Mammary epithelial cell (primary cell): ENCODE measurements at regions of chr5 and their contacts with region 1.

Region 1: GRCh38 chr5:142611154-142611553 is 74.7 kb downstream of the FGF1 start:
- DNase-seq: peak; percentile 58
- H3K4me3 ChIP-seq: no peak overlapping the region
- H3K27ac ChIP-seq: no peak overlapping the region
- H3K4me1 ChIP-seq: peaks cover 22% of the 10 kb centered on the region
- H3K27me3 ChIP-seq: no peaks in the 10 kb centered on the region
- CTCF ChIP-seq: peak; percentile 87 to 92

Region 2: GRCh38 chr5:142151436-142152383 is 459.4 kb before region 1 on chr5:
- CTCF ChIA-PET with region 1: no interaction called
- dilution Hi-C with region 1: no loop called
- in situ Hi-C with region 1: no loop called
- intact Hi-C with region 1: loop called (anchors 2 kb)
- DNase-seq: peak; percentile 37
- H3K4me3 ChIP-seq: no peak overlapping the region
- H3K27ac ChIP-seq: no peak overlapping the region
- H3K4me1 ChIP-seq: no peaks in the 10 kb centered on the region
- H3K27me3 ChIP-seq: no peaks in the 10 kb centered on the region
- CTCF ChIP-seq: peak; percentile 78 to 88

Region 3: GRCh38 chr5:142561486-142562097 is 49.6 kb before region 1 on chr5:
- CTCF ChIA-PET with region 1: no interaction called
- dilution Hi-C with region 1: loop called (anchors 5 kb)
- in situ Hi-C with region 1: no loop called
- intact Hi-C with region 1: no loop called
- DNase-seq: no peak
- H3K4me3 ChIP-seq: no peak overlapping the region
- H3K27ac ChIP-seq: no peak overlapping the region
- H3K4me1 ChIP-seq: no peaks in the 10 kb centered on the region
- H3K27me3 ChIP-seq: no peaks in the 10 kb centered on the region
- CTCF ChIP-seq: no peak

Region 4: DNA sequence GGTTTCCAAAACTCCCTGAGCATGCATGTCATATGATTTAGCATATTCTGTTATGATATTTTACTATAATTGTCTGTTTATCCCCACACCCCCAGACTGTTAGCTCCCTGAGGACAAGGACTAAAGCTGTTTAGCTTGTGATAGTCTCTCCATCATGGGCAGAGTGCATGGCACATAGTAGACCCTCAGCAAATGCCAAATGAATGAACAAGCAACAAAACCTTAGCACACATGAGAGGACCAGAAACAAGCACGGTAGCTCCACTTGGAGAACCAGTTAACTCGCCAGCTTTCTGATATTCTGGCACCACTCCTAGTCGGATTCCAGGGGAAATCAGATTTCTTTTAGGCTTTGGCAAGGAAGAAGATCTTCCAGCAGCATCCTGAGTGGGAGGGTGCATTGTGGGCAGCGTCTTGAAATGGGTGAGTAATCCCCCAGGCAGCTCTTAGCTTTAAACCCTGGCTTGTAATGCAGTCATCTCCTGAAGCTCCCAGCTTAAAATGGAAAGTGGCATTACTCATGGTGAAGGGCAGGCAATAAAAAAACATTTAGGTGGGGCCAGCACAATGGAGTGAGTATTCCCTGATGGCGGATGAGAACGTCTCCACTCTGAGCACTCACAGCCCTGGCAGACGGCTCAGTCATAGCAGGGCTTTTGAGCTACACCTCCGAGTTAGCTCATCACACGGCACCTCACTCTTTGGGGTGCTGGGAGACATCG is 33.6 kb after region 1 on chr5:
- CTCF ChIA-PET with region 1: no interaction called
- dilution Hi-C with region 1: no loop called
- in situ Hi-C with region 1: no loop called
- intact Hi-C with region 1: loop called (anchors 2 kb)
- DNase-seq: peak; percentile 99
- H3K4me3 ChIP-seq: no peak overlapping the region
- H3K27ac ChIP-seq: peak overlapping the region; percentile 74
- H3K4me1 ChIP-seq: peaks cover 22% of the 10 kb centered on the region
- H3K27me3 ChIP-seq: no peaks in the 10 kb centered on the region
- CTCF ChIP-seq: no peak

Region 5: GRCh38 chr5:142655339-142656267 is 44.4 kb after region 1 on chr5:
- CTCF ChIA-PET with region 1: interaction called, 3 read pairs
- dilution Hi-C with region 1: no loop called
- in situ Hi-C with region 1: loop called in 1 of 2 experiments (anchors 5 kb)
- intact Hi-C with region 1: loop called (anchors 1 kb)
- DNase-seq: peak; percentile 52
- H3K4me3 ChIP-seq: no peak overlapping the region
- H3K27ac ChIP-seq: no peak overlapping the region
- H3K4me1 ChIP-seq: no peaks in the 10 kb centered on the region
- H3K27me3 ChIP-seq: no peaks in the 10 kb centered on the region
- CTCF ChIP-seq: peak; percentile 96 to 100

Region 6: DNA sequence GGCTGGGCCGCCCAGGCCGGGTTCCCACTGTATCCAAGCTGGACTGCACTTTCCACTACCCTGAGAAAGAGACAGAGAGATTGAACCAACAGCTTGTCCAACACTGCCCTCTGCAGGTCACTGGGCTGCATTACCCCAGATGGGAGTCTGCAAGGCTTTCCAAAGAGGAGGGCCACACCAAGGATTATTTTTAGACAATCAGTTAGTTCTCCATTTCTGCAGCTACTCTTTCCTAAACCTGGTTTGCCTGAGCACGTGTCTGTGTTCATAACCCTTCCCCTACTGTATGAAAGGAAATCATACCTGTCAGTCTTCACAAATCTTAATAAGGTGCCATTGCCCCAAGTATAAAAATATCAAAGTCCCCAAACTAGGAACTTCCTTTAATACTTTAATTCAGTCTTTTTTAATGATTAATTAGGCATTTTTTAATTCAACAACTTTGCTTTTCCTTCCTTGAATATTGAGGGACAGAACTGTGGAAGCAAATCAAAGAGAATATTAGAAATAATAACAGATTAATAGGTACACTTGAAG is 88.1 kb after region 1 on chr5:
- CTCF ChIA-PET with region 1: interaction called, 6 read pairs
- dilution Hi-C with region 1: loop called (anchors 5 kb)
- in situ Hi-C with region 1: loop called (anchors 5 to 10 kb)
- intact Hi-C with region 1: loop called (anchors 1 kb)
- DNase-seq: peak; percentile 68
- H3K4me3 ChIP-seq: no peak overlapping the region
- H3K27ac ChIP-seq: no peak overlapping the region
- H3K4me1 ChIP-seq: peaks cover 10% of the 10 kb centered on the region
- H3K27me3 ChIP-seq: no peaks in the 10 kb centered on the region
- CTCF ChIP-seq: peak; percentile 98 to 99

Region 7: GRCh38 chr5:142888469-142889085 is 277.4 kb after region 1 on chr5:
- CTCF ChIA-PET with region 1: no interaction called
- dilution Hi-C with region 1: no loop called
- in situ Hi-C with region 1: loop called in 1 of 2 experiments (anchors 25 kb)
- intact Hi-C with region 1: loop called (anchors 10 kb)
- DNase-seq: no peak
- H3K4me3 ChIP-seq: no peak overlapping the region
- H3K27ac ChIP-seq: no peak overlapping the region
- H3K4me1 ChIP-seq: no peaks in the 10 kb centered on the region
- H3K27me3 ChIP-seq: no peaks in the 10 kb centered on the region
- CTCF ChIP-seq: peak; percentile 53 to 70